ENCODE measurements at regions of chr1 and their contacts with region 1.

Region 1: GRCh38 chr1:205543411-205544301 is 39.2 kb downstream of the CDK18 start:
- DNase-seq: peak; percentile 99
- ATAC-seq: peak; percentile 86
- H3K4me3 ChIP-seq: peak overlapping the region; percentile 59
- H3K27ac ChIP-seq: peak overlapping the region; percentile 99
- H3K4me1 ChIP-seq: peaks cover 33% of the 10 kb centered on the region
- H3K27me3 ChIP-seq: no peaks in the 10 kb centered on the region
- CTCF ChIP-seq: peak; percentile 37

Region 2: GRCh38 chr1:205354259-205354904 is 189.3 kb before region 1 on chr1:
- CTCF ChIA-PET with region 1: no interaction called
- POLR2A ChIA-PET with region 1: no interaction called
- intact Hi-C with region 1: no loop called
- DNase-seq: peak; percentile 84
- ATAC-seq: peak; percentile 61
- H3K4me3 ChIP-seq: no peak overlapping the region
- H3K27ac ChIP-seq: peak overlapping the region; percentile 52
- H3K4me1 ChIP-seq: peaks cover 18% of the 10 kb centered on the region
- H3K27me3 ChIP-seq: peaks cover 7% of the 10 kb centered on the region
- CTCF ChIP-seq: peak; percentile 95

Region 3: GRCh38 chr1:205458777-205459566 is 84.7 kb before region 1 on chr1:
- CTCF ChIA-PET with region 1: no interaction called
- POLR2A ChIA-PET with region 1: no interaction called
- intact Hi-C with region 1: no loop called
- DNase-seq: peak; percentile 75
- ATAC-seq: peak; percentile 85
- H3K4me3 ChIP-seq: no peak overlapping the region
- H3K27ac ChIP-seq: no peak overlapping the region
- H3K4me1 ChIP-seq: no peaks in the 10 kb centered on the region; the same call in 1 of the 2 replicates
- H3K27me3 ChIP-seq: peaks cover 87% of the 10 kb centered on the region
- CTCF ChIP-seq: no peak

Region 4: GRCh38 chr1:205578780-205579606 is 35.3 kb after region 1 on chr1:
- CTCF ChIA-PET with region 1: interaction called, 19 read pairs
- POLR2A ChIA-PET with region 1: interaction called, 3 read pairs
- intact Hi-C with region 1: loop called (anchors 2 kb)
- DNase-seq: peak; percentile 95
- ATAC-seq: peak; percentile 75
- H3K4me3 ChIP-seq: no peak overlapping the region
- H3K27ac ChIP-seq: peak overlapping the region; percentile 59
- H3K4me1 ChIP-seq: peaks cover 25% of the 10 kb centered on the region
- H3K27me3 ChIP-seq: no peaks in the 10 kb centered on the region
- CTCF ChIP-seq: no peak

Measured in PC-3 (cell line).